Psoas muscle (tissue), 8 donors: ENCODE measurements at regions of chr10 and their contacts with region 1.

Region 1: DNA sequence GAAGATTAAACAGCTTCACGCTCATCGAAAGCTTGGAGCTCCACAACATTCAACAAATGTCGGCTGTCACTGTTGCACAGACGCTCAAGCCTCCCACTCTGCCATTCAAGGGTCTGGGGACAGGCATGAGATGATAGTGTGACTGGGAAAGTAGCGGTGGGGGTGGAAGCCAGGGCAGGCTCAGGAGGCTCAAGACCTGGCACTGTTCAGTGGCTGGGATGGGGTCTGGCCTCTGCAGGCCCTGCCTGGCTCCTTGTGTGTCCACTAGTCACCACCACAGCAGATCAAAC is 13.5 kb upstream of the GTPBP4 start:
- DNase-seq: no peak
- ATAC-seq: no peak
- H3K4me3 ChIP-seq: no peak overlapping the region
- H3K27ac ChIP-seq: no peak overlapping the region
- H3K4me1 ChIP-seq: peaks cover 10% of the 10 kb centered on the region
- H3K27me3 ChIP-seq: peaks cover 0 to under 1% (median 0%) of the 10 kb centered on the region in 3 donors
- CTCF ChIP-seq: no peak

Region 2: GRCh38 chr10:154348-154747 is 820.4 kb before region 1 on chr10:
- intact Hi-C with region 1: no loop called
- DNase-seq: no peak
- ATAC-seq: peak in 3 of 4 donors; percentile 75 to 79 (median 77)
- H3K4me3 ChIP-seq: no peak overlapping the region
- H3K27ac ChIP-seq: no peak overlapping the region
- H3K4me1 ChIP-seq: peaks cover 20% of the 10 kb centered on the region
- H3K27me3 ChIP-seq: no peaks in the 10 kb centered on the region
- CTCF ChIP-seq: no peak

Region 3: DNA sequence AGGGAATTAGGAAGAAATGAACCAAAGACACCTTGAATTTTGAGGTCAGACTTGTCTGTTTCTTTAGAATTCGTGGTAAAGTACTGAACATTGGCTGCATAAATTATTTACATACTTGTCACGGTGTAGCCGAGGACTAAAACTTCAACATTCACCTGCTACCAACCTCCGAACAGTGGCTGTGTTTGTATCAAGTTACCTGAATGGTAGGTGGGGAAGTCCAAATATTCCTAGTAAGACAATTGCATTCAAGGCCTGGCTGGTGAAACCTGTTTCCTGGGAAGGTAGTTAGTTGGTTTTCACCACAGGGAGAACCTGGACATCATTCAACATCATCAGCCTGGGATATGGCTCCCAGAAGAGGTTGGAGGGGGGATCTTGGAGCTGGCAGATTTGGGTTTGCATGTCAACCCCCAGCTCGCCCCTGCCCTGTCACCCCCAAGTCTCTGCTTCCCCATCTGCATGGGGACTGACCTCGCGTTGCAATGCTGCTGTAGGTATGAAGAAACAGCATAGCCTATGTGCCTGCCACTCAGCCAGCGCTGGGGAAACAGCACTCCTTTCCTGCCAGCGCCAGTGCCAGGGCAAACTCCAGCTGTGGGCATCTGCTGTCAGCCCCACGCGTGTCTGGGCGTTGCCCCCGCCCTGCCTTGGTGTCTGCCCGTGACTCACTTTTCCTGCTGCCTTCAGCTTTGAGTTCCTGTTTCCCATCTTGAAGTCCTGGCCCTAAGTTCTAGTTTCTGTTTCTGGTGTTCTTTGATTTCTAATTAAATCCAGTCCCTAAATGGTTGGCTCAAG is 30.5 kb before region 1 on chr10:
- intact Hi-C with region 1: loop called in 1 of 2 experiments (anchors 5 kb)
- DNase-seq: peak; percentile 72 to 79
- ATAC-seq: peak; percentile 55 to 69 (median 61)
- H3K4me3 ChIP-seq: no peak overlapping the region
- H3K27ac ChIP-seq: no peak overlapping the region
- H3K4me1 ChIP-seq: no peaks in the 10 kb centered on the region
- H3K27me3 ChIP-seq: no peaks in the 10 kb centered on the region
- CTCF ChIP-seq: no peak

Region 4: GRCh38 chr10:1600861-1601260 is 626.1 kb after region 1 on chr10:
- intact Hi-C with region 1: no loop called
- DNase-seq: no peak
- ATAC-seq: no peak
- H3K4me3 ChIP-seq: no peak overlapping the region
- H3K27ac ChIP-seq: no peak overlapping the region
- H3K4me1 ChIP-seq: no peaks in the 10 kb centered on the region
- H3K27me3 ChIP-seq: peaks cover 0 to 1% (median 0%) of the 10 kb centered on the region in 3 donors
- CTCF ChIP-seq: no peak